ENCODE measurements at regions of chr6 and their contacts with region 1.

Region 1: DNA sequence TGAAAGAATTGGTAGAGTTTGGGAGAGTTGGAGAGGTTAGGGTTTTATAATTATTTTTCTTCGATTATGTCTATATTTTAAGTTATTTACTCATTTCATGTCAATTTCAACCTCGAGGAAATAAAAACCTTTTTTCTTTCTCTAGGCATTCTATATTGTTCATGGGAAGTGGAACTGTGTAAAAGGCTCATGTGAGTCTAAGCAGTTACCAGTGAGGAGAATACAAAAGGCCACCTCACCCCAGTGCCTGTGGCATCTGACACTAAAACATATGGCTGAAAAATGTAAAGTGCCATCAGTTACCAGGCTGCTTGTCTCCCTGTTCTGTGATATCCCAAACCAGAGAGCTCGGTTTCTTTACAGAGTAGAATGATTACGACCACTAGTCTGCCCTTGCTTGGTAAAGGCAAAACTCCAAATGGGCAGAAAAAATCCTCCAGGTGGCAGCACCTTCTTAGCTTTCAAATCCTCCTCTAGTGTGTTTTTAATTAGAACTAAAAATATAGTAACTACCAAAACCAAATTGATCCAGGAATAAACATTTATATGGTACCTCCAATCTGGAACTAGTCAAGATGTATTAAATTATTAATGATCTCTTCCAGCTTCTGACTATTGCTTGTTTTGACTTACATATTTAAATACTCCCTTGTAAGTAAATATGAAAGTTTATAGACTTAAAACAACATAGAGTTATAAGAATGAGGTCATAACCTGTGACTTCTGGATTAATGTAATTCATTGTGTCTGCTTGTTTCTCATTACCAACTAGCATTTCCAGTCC is 122.6 kb upstream of the MCHR2 start:
- DNase-seq: peak; percentile 7
- H3K4me3 ChIP-seq: no peak overlapping the region
- H3K27ac ChIP-seq: no peak overlapping the region
- H3K4me1 ChIP-seq: no peaks in the 10 kb centered on the region
- H3K27me3 ChIP-seq: peaks cover 5% of the 10 kb centered on the region
- CTCF ChIP-seq: peak; percentile 51 to 60 (median 57)

Region 2: DNA sequence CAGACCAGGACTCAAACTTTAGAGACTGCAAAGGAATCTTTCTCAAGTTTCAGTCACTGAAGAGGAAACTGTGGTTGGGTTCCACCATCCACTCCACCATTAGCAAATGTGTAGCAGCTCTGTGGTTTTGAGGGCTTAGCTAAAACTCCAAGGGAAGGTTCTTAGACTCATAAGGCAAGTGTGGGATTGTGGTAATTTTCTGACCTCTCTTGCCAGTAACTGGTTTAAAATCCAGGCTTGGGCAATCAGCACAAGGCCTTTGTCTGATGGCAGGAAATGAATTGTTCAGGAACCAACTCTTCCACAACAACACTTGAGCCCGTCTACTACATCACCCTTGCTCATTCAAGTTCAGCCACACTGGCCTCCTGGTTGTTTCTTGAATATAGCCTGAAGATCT is 1100.2 kb before region 1 on chr6:
- dilution Hi-C with region 1: no loop called
- DNase-seq: no peak
- H3K4me3 ChIP-seq: no peak overlapping the region
- H3K27ac ChIP-seq: no peak overlapping the region
- H3K4me1 ChIP-seq: no peaks in the 10 kb centered on the region
- H3K27me3 ChIP-seq: no peaks in the 10 kb centered on the region
- CTCF ChIP-seq: no peak

Region 3: DNA sequence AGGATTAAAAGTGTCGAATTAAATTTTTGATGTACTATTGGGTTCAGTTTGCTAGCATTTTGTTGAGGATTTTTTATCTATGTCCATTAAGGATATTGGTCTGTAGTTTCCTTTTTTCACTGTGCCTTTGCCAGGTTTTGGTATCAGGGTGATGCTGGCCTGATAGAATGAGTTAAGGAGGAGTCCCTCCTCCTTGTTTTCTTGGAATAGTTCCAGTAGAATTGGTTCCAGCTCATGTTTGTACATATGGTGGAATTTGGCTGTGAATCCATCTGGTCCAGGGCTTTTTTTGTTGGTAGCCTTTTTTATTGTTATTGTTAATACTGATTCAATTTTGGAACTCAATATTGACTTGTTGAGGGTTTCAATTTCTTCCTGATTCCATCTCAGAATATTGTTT is 206.3 kb after region 1 on chr6:
- dilution Hi-C with region 1: no loop called
- DNase-seq: no peak
- H3K4me3 ChIP-seq: no peak overlapping the region
- H3K27ac ChIP-seq: no peak overlapping the region
- H3K4me1 ChIP-seq: no peaks in the 10 kb centered on the region
- H3K27me3 ChIP-seq: no peaks in the 10 kb centered on the region
- CTCF ChIP-seq: no peak

Region 4: DNA sequence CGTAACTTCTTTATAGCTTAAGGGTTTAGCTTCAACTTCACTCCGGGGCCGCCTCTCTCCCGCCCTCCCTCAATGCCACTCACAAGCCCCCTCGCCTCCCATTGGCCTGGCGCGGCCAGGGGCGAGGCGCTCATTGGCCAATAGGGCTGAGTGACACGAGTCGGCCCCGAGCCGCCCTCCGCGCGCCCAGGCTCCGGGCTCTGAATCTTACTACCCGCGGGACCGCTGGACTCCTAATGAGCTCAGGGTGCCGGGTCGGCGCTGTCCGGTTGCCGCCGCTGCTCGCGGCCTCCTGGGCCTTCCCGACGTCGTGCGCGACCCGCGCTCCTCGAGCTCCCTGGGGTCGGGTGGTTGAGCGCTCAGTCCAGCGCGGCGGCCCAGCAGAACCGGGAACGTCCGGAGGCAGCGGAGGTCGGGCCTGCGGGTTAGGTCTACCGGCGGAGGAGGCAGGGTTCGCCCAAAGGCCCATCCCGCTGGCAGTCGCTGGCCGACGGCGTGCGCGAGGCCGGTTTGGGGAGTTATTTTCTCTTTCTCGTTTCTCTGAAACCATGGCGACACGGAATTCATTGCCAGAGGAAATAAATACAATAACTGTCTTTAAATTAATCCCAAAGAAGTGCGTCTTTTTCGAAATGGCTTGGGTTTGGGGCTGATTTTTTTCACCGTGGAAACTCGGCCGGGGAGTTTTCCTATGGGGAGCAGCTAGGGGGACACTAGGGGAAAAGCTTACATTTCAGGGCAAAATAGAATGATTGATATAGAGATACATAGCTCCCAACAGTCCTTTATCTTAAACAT is 348.5 kb after region 1 on chr6 and contains the start of gene SIM1:
- dilution Hi-C with region 1: loop called (anchors 25 kb)
- DNase-seq: no peak
- H3K4me3 ChIP-seq: no peak within 1 kb of the TSS
- H3K27ac ChIP-seq: no peak within 1 kb of the TSS
- H3K4me1 ChIP-seq: no peaks in the 10 kb centered on the region
- H3K27me3 ChIP-seq: peaks cover 100% of the 10 kb centered on the region
- CTCF ChIP-seq: no peak
- polyA plus RNA-seq, gene SIM1: not detected in 3 replicates